CD4-positive, alpha-beta memory T cell (primary cell): ENCODE measurements at regions of chr12 and their contacts with region 1.

Region 1: GRCh38 chr12:12008931-12009611 is 61.7 kb upstream of the BCL2L14 start:
- DNase-seq: peak; percentile 46 to 86 (median 56)
- H3K4me3 ChIP-seq: peak overlapping the region in 1 of 2 donors; percentile 12
- H3K4me3 Mint-ChIP-seq: peak overlapping the region; percentile 66 to 89 (median 80)
- H3K27ac ChIP-seq: peak overlapping the region; percentile 75
- H3K27ac Mint-ChIP-seq: peak overlapping the region; percentile 95 to 99 (median 97)
- H3K4me1 ChIP-seq: peaks cover 61% of the 10 kb centered on the region
- H3K4me1 Mint-ChIP-seq: peaks cover 65 to 92% (median 85%) of the 10 kb centered on the region in 4 donors
- H3K27me3 ChIP-seq: no peaks in the 10 kb centered on the region
- H3K27me3 Mint-ChIP-seq: no peaks in the 10 kb centered on the region

Region 2: DNA sequence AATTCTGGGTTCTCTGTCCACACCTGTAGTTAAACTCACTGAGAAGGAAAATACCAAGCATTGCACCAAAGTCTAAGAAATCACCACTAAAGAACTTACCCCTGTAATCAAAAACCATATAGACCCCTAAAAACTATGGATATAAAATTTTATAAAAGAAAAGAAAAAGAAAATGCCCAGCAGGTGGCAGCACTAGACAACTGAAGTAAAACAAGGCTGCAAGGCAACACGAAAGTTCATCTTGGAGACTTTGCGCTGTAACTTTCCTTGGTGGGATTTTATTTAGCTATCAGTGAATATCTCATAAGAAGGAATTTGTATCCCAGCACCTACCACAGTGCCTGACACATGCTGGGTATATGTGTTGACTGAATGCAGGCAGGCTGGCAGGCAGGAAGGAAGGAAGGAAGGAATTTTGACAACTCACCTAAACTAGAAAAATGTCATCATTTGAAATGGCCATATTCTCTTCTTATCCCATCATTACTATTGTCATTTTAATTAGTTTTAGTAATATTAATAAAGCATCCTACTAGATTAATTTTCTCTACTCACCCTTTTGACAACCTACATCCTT is 427.8 kb before region 1 on chr12:
- CTCF ChIA-PET with region 1: interaction called, 24 read pairs
- POLR2A ChIA-PET with region 1: interaction called, 3 read pairs
- intact Hi-C with region 1: no loop called
- DNase-seq: peak; percentile 62 to 71 (median 67)
- H3K4me3 ChIP-seq: no peak overlapping the region
- H3K4me3 Mint-ChIP-seq: peak overlapping the region in 1 of 8 donors; percentile 59
- H3K27ac ChIP-seq: no peak overlapping the region
- H3K27ac Mint-ChIP-seq: peak overlapping the region in 1 of 7 donors; percentile 79
- H3K4me1 ChIP-seq: peaks cover 3% of the 10 kb centered on the region
- H3K4me1 Mint-ChIP-seq: peaks cover 0 to 4% (median 3%) of the 10 kb centered on the region in 4 donors
- H3K27me3 ChIP-seq: no peaks in the 10 kb centered on the region
- H3K27me3 Mint-ChIP-seq: peaks cover 2 to 3% of the 10 kb centered on the region in 2 donors

Region 3: DNA sequence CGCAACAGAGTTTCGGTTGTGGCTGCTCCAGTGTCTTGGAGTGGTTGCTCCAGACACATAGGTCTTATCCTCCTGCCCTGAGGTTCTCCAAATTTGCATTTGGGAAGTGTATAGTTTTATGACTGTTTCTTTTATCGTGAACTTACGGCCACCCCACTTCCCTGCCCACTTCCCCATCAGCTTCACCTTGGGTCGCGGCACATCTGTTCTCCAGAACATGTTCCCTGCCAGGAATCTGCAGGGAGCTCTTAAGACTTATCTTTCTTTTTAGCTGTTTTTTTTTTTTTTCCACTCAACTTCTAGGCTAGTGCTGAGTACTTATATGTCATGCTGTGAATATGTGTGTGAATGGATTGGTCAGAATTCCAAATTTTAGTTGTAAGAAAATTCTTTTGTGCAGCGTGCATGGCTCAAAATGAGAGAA is 284.2 kb before region 1 on chr12:
- CTCF ChIA-PET with region 1: interaction called, 8 read pairs
- POLR2A ChIA-PET with region 1: interaction called, 9 read pairs
- intact Hi-C with region 1: loop called (anchors 5 kb)
- DNase-seq: no peak
- H3K4me3 ChIP-seq: no peak overlapping the region
- H3K4me3 Mint-ChIP-seq: peak overlapping the region in 1 of 8 donors; percentile 17
- H3K27ac ChIP-seq: no peak overlapping the region
- H3K27ac Mint-ChIP-seq: peak overlapping the region in 4 of 7 donors; percentile 6 to 55 (median 40)
- H3K4me1 ChIP-seq: peaks cover 61% of the 10 kb centered on the region
- H3K4me1 Mint-ChIP-seq: peaks cover 43 to 85% (median 69%) of the 10 kb centered on the region in 4 donors
- H3K27me3 ChIP-seq: no peaks in the 10 kb centered on the region
- H3K27me3 Mint-ChIP-seq: no peaks in the 10 kb centered on the region

Region 4: GRCh38 chr12:11901701-11902524 is 107.2 kb before region 1 on chr12:
- CTCF ChIA-PET with region 1: interaction called, 3 read pairs
- POLR2A ChIA-PET with region 1: interaction called, 5 read pairs
- intact Hi-C with region 1: loop called (anchors 5 kb)
- DNase-seq: peak in 1 of 5 donors; percentile 4
- H3K4me3 ChIP-seq: peak overlapping the region in 1 of 2 donors; percentile 8
- H3K4me3 Mint-ChIP-seq: peak overlapping the region; percentile 65 to 83 (median 75)
- H3K27ac ChIP-seq: no peak overlapping the region
- H3K27ac Mint-ChIP-seq: peak overlapping the region; percentile 69 to 92 (median 88)
- H3K4me1 ChIP-seq: peaks cover 30% of the 10 kb centered on the region
- H3K4me1 Mint-ChIP-seq: peaks cover 27 to 53% (median 43%) of the 10 kb centered on the region in 4 donors
- H3K27me3 ChIP-seq: no peaks in the 10 kb centered on the region
- H3K27me3 Mint-ChIP-seq: no peaks in the 10 kb centered on the region

Region 5: GRCh38 chr12:11991604-11992003 is 17.5 kb before region 1 on chr12:
- CTCF ChIA-PET with region 1: interaction called, 28 read pairs
- POLR2A ChIA-PET with region 1: interaction called, 4 read pairs
- intact Hi-C with region 1: no loop called
- DNase-seq: no peak
- H3K4me3 ChIP-seq: no peak overlapping the region
- H3K4me3 Mint-ChIP-seq: no peak overlapping the region
- H3K27ac ChIP-seq: no peak overlapping the region
- H3K27ac Mint-ChIP-seq: no peak overlapping the region
- H3K4me1 ChIP-seq: no peaks in the 10 kb centered on the region
- H3K4me1 Mint-ChIP-seq: peaks cover 10 to 29% (median 11%) of the 10 kb centered on the region in 4 donors
- H3K27me3 ChIP-seq: no peaks in the 10 kb centered on the region
- H3K27me3 Mint-ChIP-seq: no peaks in the 10 kb centered on the region

Region 6: DNA sequence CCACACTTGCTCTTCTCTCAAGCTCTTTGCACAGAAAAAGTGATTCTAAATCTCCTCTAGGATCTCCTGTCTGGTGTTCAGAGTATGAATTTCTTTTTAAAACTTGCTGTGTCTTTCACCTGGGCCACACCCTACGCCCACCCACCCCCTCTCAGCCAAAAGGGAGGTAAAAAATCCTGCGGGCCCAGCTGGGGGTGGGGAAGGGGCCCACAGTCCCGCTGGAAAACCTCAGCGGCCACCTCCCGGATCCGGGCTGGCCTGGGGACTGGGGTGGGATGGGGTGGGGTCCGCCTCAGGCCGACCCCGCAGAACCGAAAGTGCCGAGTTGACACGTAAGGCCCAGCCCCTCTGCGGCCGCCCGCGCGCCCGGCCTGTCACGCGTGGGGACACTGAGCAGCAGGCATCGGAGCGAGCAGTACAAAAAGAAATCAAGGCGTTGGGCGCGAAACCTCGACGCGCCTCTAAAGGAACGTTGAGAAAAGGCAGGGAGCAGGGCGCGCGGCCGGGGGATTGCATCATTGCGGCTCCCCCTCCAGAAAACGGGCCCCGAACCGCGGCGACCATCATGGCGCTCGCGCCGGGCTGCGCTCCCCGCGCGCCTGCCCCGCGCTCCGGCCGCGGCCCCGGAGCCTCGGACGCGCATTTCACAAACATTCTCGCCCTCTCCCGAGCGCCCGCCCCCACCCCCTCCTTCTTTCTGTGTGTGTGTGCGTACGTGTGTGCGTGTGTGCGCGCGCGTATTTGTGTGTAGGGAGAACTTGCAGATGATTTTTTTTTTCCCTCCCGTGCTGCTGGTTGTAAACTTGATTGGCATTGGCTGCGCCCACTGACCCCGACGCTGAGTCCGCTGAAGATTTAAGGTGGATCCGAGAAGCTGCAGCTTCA is 715.8 kb after region 1 on chr12:
- CTCF ChIA-PET with region 1: no interaction called
- POLR2A ChIA-PET with region 1: interaction called, 4 read pairs
- intact Hi-C with region 1: loop called (anchors 5 kb)
- DNase-seq: peak; percentile 93 to 97 (median 96)
- H3K4me3 ChIP-seq: peak overlapping the region in 1 of 2 donors; percentile 80
- H3K4me3 Mint-ChIP-seq: peak overlapping the region; percentile 89 to 96 (median 92)
- H3K27ac ChIP-seq: peak overlapping the region; percentile 95
- H3K27ac Mint-ChIP-seq: peak overlapping the region; percentile 95 to 99 (median 97)
- H3K4me1 ChIP-seq: peaks cover 56% of the 10 kb centered on the region
- H3K4me1 Mint-ChIP-seq: peaks cover 37 to 72% (median 43%) of the 10 kb centered on the region in 4 donors
- H3K27me3 ChIP-seq: no peaks in the 10 kb centered on the region
- H3K27me3 Mint-ChIP-seq: peaks cover 0 to 1% of the 10 kb centered on the region in 2 donors